ENCODE measurements at regions of chr15 and their contacts with region 1.

Region 1: DNA sequence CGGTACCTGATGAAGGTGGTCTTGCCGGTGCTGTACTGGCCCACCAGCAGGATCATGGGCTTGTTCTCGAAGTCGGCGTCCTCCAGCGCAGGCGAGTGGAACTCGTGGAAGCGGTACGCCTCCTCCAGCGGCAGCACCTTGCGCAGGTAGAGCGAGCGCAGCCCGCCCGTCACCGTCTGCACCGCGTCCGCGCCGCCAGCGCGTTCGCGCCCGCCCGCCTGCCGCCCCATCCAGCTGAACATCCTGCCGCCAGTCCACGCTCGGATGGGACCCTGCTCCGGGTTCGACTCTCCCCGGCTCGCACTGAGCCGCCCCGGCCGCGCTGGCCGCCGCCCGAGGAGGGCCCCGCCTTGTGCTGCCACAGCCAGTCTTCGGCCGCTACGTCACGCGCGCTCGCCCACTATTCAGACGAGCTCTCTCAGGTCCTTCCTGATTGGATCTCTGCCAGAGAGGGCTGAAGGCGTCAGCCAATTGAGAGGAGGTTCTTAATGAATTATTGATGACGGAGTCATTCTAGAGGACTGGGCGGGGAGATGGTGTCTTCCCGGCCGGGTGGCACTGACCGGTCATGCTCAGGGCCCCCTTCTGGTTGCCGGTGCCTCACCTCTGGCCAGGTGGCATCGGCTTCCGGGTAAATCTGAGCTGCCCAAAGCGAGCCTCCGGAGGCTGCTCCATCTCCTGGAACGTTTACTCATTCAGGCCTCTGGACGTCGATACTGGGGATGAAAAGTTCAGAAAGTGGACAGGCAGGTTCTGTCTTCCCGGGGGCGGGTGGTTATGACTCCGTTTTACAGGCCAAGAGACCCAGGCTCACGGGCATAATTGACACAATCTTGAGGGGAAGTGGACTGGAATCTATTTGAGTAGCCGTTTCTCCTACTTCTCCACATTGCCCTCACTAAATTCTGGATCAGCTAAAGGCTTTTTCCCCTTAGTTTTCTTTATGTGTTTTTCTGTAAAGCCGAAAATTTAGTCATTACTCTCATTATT is at the start of gene EHD4:
- DNase-seq: peak; percentile 84 to 99 (median 90)
- ATAC-seq: peak; percentile 78
- H3K4me3 ChIP-seq: peak within 1 kb of the TSS; percentile 82
- H3K4me3 Mint-ChIP-seq: peak within 1 kb of the TSS; percentile 98
- H3K27ac ChIP-seq: peak within 1 kb of the TSS; percentile 61 to 81
- H3K27ac Mint-ChIP-seq: peak within 1 kb of the TSS; percentile 95
- H3K4me1 ChIP-seq: peaks cover 40% of the 10 kb centered on the region
- H3K4me1 Mint-ChIP-seq: peaks cover 46% of the 10 kb centered on the region
- H3K27me3 ChIP-seq: peaks cover 0 to 5% of the 10 kb centered on the region in 2 experiments
- H3K27me3 Mint-ChIP-seq: peaks cover 19% of the 10 kb centered on the region
- CTCF ChIP-seq: no peak
- total RNA-seq, gene EHD4: 39.8 to 40.5 TPM

Region 2: GRCh38 chr15:41621200-41622193 is 351.1 kb before region 1 on chr15:
- CTCF ChIA-PET with region 1: no interaction called
- POLR2A ChIA-PET with region 1: no interaction called
- intact Hi-C with region 1: loop called in 1 of 2 experiments (anchors 5 kb)
- DNase-seq: peak; percentile 46 to 92 (median 70)
- ATAC-seq: peak; percentile 75
- H3K4me3 ChIP-seq: peak overlapping the region; percentile 64
- H3K4me3 Mint-ChIP-seq: peak overlapping the region; percentile 69
- H3K27ac ChIP-seq: no peak overlapping the region
- H3K27ac Mint-ChIP-seq: peak overlapping the region; percentile 73
- H3K4me1 ChIP-seq: peaks cover 19% of the 10 kb centered on the region
- H3K4me1 Mint-ChIP-seq: peaks cover 32% of the 10 kb centered on the region
- H3K27me3 ChIP-seq: no peaks in the 10 kb centered on the region
- H3K27me3 Mint-ChIP-seq: no peaks in the 10 kb centered on the region
- CTCF ChIP-seq: no peak

Region 3: GRCh38 chr15:41827880-41828806 is 144.4 kb before region 1 on chr15 and contains the start of gene JMJD7:
- CTCF ChIA-PET with region 1: no interaction called
- POLR2A ChIA-PET with region 1: interaction called, 4 read pairs
- intact Hi-C with region 1: loop called in 1 of 2 experiments (anchors 5 kb)
- DNase-seq: peak; percentile 92 to 99 (median 96)
- ATAC-seq: peak; percentile 94
- H3K4me3 ChIP-seq: peak within 1 kb of the TSS; percentile 92
- H3K4me3 Mint-ChIP-seq: peak within 1 kb of the TSS; percentile 90
- H3K27ac ChIP-seq: peak within 1 kb of the TSS; percentile 53 to 64
- H3K27ac Mint-ChIP-seq: peak within 1 kb of the TSS; percentile 87
- H3K4me1 ChIP-seq: peaks cover 52% of the 10 kb centered on the region
- H3K4me1 Mint-ChIP-seq: peaks cover 30% of the 10 kb centered on the region
- H3K27me3 ChIP-seq: no peaks in the 10 kb centered on the region
- H3K27me3 Mint-ChIP-seq: no peaks in the 10 kb centered on the region
- CTCF ChIP-seq: no peak
- total RNA-seq, gene JMJD7: 35.6 to 38.4 TPM

Region 4: GRCh38 chr15:41904541-41905005 is 68.0 kb before region 1 on chr15:
- CTCF ChIA-PET with region 1: interaction called, 10 read pairs
- POLR2A ChIA-PET with region 1: interaction called, 5 read pairs
- intact Hi-C with region 1: no loop called
- DNase-seq: peak; percentile 63 to 85 (median 71)
- ATAC-seq: peak; percentile 88
- H3K4me3 ChIP-seq: no peak overlapping the region
- H3K4me3 Mint-ChIP-seq: no peak overlapping the region
- H3K27ac ChIP-seq: no peak overlapping the region
- H3K27ac Mint-ChIP-seq: peak overlapping the region; percentile 80
- H3K4me1 ChIP-seq: peaks cover 10% of the 10 kb centered on the region
- H3K4me1 Mint-ChIP-seq: peaks cover 7% of the 10 kb centered on the region
- H3K27me3 ChIP-seq: no peaks in the 10 kb centered on the region
- H3K27me3 Mint-ChIP-seq: no peaks in the 10 kb centered on the region
- CTCF ChIP-seq: peak; percentile 95

Region 5: GRCh38 chr15:42139596-42139995 is 167.0 kb after region 1 on chr15:
- CTCF ChIA-PET with region 1: no interaction called
- POLR2A ChIA-PET with region 1: no interaction called
- intact Hi-C with region 1: no loop called
- DNase-seq: peak in 1 of 14 experiments; percentile 21
- ATAC-seq: no peak
- H3K4me3 ChIP-seq: no peak overlapping the region
- H3K4me3 Mint-ChIP-seq: no peak overlapping the region
- H3K27ac ChIP-seq: no peak overlapping the region
- H3K27ac Mint-ChIP-seq: no peak overlapping the region
- H3K4me1 ChIP-seq: no peaks in the 10 kb centered on the region
- H3K4me1 Mint-ChIP-seq: no peaks in the 10 kb centered on the region
- H3K27me3 ChIP-seq: no peaks in the 10 kb centered on the region
- H3K27me3 Mint-ChIP-seq: peaks cover under 1% of the 10 kb centered on the region
- CTCF ChIP-seq: no peak

Measured in CD4-positive, alpha-beta T cell (primary cell).